PC-9 (cell line): ENCODE measurements at regions of chr11 and their contacts with region 1.

Region 1: GRCh38 chr11:73752216-73752867 is 8.5 kb downstream of the RAB6A start:
- DNase-seq: no peak
- H3K4me3 ChIP-seq: no peak overlapping the region
- H3K27ac ChIP-seq: no peak overlapping the region
- H3K4me1 ChIP-seq: 0 out of 2 replicates have a peak, but pooled peaks cover 2% of the 10 kb centered on the region
- H3K27me3 ChIP-seq: no peaks in the 10 kb centered on the region
- CTCF ChIP-seq: no peak

Region 2: DNA sequence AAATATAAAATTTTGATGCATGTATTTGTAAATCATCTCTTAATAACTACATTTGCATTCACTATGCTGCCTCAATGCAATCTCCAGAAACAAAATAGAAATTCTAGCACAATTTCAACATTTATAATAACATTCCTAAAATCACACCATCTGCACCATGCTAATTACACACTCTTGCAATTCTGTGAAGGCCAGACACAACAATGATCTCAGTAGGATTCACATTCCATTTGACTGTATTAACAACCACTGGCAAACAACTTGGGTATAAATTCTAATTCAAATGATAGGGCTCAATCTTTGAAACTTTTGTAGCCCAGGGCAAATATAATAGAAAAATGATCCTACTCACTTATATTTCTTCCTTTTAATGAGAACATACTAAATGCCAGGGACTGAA is 17.3 kb before region 1 on chr11:
- CTCF ChIA-PET with region 1: no interaction called
- POLR2A ChIA-PET with region 1: interaction called, 17 read pairs
- intact Hi-C with region 1: no loop called
- DNase-seq: no peak
- H3K4me3 ChIP-seq: no peak overlapping the region
- H3K27ac ChIP-seq: peak overlapping the region; percentile 25; the same call in 1 of the 2 replicates
- H3K4me1 ChIP-seq: no peaks in the 10 kb centered on the region
- H3K27me3 ChIP-seq: no peaks in the 10 kb centered on the region
- CTCF ChIP-seq: no peak

Region 3: GRCh38 chr11:74237541-74237940 is 485.2 kb after region 1 on chr11:
- CTCF ChIA-PET with region 1: no interaction called
- POLR2A ChIA-PET with region 1: interaction called, 17 read pairs
- intact Hi-C with region 1: no loop called
- DNase-seq: no peak
- H3K4me3 ChIP-seq: no peak overlapping the region
- H3K27ac ChIP-seq: no peak overlapping the region
- H3K4me1 ChIP-seq: no peaks in the 10 kb centered on the region
- H3K27me3 ChIP-seq: no peaks in the 10 kb centered on the region
- CTCF ChIP-seq: no peak